Activated CD4-positive, alpha-beta memory T cell treated with anti-CD3 and anti-CD28 coated beads for 36 hours (primary cell): ENCODE measurements at regions of chr12 and their contacts with region 1.

Region 1: GRCh38 chr12:82685790-82686167 is 927 bp upstream of the TMTC2 start:
- DNase-seq: peak; percentile 95
- H3K4me3 Mint-ChIP-seq: peak overlapping the region; percentile 86
- H3K27ac Mint-ChIP-seq: peak overlapping the region; percentile 75
- H3K4me1 Mint-ChIP-seq: peaks cover 9% of the 10 kb centered on the region
- H3K27me3 Mint-ChIP-seq: peaks cover 5% of the 10 kb centered on the region

Region 2: GRCh38 chr12:82672811-82673495 is 12.8 kb before region 1 on chr12:
- CTCF ChIA-PET with region 1: interaction called, 33 read pairs
- POLR2A ChIA-PET with region 1: no interaction called
- intact Hi-C with region 1: no loop called
- DNase-seq: no peak
- H3K4me3 Mint-ChIP-seq: no peak overlapping the region
- H3K27ac Mint-ChIP-seq: no peak overlapping the region
- H3K4me1 Mint-ChIP-seq: no peaks in the 10 kb centered on the region
- H3K27me3 Mint-ChIP-seq: peaks cover 10% of the 10 kb centered on the region

Region 3: DNA sequence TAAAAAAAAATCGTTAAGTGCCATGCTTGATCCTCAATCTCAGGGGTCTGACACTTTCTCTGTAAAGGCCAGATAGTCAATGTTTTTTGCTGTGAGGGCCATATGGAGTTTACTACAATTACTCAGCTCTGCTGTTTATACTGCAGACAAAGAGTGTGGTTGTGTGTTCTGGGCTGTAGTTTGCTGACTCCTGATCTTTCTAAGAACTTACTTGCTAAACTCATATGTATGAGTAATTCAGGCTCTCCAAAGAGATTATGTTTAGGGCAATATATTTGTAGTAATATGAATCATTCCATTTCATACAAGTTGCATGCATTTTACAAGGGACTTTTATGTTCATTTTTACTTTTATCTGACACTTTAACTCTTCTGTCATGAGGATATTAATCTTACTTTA is 189.2 kb after region 1 on chr12:
- CTCF ChIA-PET with region 1: no interaction called
- POLR2A ChIA-PET with region 1: no interaction called
- intact Hi-C with region 1: loop called (anchors 2 kb)
- DNase-seq: no peak
- H3K4me3 Mint-ChIP-seq: no peak overlapping the region
- H3K27ac Mint-ChIP-seq: no peak overlapping the region
- H3K4me1 Mint-ChIP-seq: peaks cover 11% of the 10 kb centered on the region
- H3K27me3 Mint-ChIP-seq: no peaks in the 10 kb centered on the region

Region 4: DNA sequence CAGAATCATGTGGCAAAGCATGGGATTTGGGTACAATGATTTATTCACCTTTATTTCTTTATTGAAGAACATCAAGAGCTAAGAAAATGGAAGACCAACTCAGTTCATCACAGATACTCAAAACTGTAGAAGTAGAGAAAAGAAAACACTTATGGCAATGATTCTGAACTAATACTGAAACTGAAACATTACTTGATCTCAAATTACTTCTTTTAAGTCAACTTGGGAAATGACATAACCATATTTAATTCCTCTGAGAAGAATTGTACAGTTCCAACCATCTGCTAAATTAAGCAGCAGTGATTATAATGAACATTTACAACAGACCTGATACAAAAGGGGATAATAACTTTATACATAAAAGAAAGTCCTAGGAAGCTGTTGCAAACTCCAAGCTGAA is 467.4 kb after region 1 on chr12:
- CTCF ChIA-PET with region 1: no interaction called
- POLR2A ChIA-PET with region 1: no interaction called
- intact Hi-C with region 1: loop called (anchors 5 kb)
- DNase-seq: no peak
- H3K4me3 Mint-ChIP-seq: no peak overlapping the region
- H3K27ac Mint-ChIP-seq: no peak overlapping the region
- H3K4me1 Mint-ChIP-seq: peaks cover 6% of the 10 kb centered on the region
- H3K27me3 Mint-ChIP-seq: peaks cover 3% of the 10 kb centered on the region

Region 5: GRCh38 chr12:83954939-83955601 is 1269.3 kb after region 1 on chr12:
- CTCF ChIA-PET with region 1: no interaction called
- POLR2A ChIA-PET with region 1: no interaction called
- intact Hi-C with region 1: loop called (anchors 10 kb)
- DNase-seq: no peak
- H3K4me3 Mint-ChIP-seq: no peak overlapping the region
- H3K27ac Mint-ChIP-seq: no peak overlapping the region
- H3K4me1 Mint-ChIP-seq: no peaks in the 10 kb centered on the region
- H3K27me3 Mint-ChIP-seq: no peaks in the 10 kb centered on the region